Dorsolateral prefrontal cortex (tissue), 120 donors: ENCODE measurements at regions of chr3 and their contacts with region 1.

Region 1: GRCh38 chr3:171187706-171188290 is 161.3 kb upstream of the SLC2A2 start:
- DNase-seq: no peak
- H3K4me3 ChIP-seq: no peak overlapping the region
- H3K27ac ChIP-seq: peak overlapping the region in 2 of 59 donors; percentile 29 to 38
- H3K27me3 ChIP-seq: no peaks in the 10 kb centered on the region
- CTCF ChIP-seq: peak; percentile 35 to 87 (median 73)

Region 2: GRCh38 chr3:171018156-171018935 is 169.5 kb before region 1 on chr3:
- intact Hi-C with region 1: no loop called
- DNase-seq: no peak
- H3K4me3 ChIP-seq: no peak overlapping the region
- H3K27ac ChIP-seq: no peak overlapping the region
- H3K27me3 ChIP-seq: peaks cover 0 to 5% (median 0%) of the 10 kb centered on the region in 45 donors
- CTCF ChIP-seq: no peak

Region 3: DNA sequence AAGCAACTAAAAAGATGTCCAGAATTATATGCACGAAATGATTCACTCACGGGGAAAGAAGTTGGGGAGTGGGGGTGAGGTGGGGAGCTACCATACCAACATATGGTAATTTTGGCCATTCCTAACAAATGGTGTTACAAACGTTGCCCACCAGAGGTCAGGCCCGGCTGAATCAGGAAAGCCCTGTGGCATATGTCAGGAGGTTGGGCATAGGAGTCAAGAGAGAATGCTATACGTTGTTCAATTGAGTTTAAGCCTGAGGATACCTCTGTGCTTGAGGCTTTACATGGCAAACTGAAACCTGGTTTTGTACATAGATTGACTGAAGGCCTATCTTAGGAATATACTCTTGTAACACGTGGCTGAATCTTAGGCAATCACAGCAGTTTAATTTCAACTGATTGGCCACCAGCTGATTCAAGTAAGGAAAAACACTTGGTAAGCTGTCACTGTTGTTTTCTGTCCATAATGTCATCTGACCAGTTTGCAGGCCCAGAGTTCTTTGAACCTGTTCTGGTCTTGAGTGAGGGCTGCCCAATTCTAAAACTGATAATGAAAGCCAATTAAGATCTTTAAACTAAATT is 137.8 kb before region 1 on chr3:
- intact Hi-C with region 1: loop called (anchors 2 to 10 kb)
- DNase-seq: peak in 8 of 10 donors; percentile 18 to 62 (median 50)
- H3K4me3 ChIP-seq: no peak overlapping the region
- H3K27ac ChIP-seq: peak overlapping the region in 2 of 59 donors; percentile 6 to 18
- H3K27me3 ChIP-seq: no peaks in the 10 kb centered on the region
- CTCF ChIP-seq: peak in 55 of 56 donors; percentile 21 to 84 (median 66)

Region 4: DNA sequence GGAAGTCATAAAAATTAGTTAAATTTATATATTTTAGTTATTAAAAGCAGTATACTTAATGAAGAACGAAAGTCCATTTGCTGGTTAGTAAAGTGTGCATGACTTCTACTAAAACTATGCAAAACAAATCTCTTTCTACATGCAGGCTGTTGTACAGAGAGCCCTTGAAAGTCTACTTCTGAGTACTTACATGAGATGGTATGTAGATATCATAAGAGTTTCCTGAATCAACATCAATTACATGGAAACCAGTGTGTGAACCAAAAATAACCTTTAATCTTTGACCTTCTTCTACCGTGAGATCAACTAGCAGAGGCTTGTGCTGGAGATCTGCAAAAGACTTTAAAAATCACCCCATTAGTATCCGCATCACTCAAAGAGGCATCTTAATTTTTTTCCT is 119.1 kb before region 1 on chr3:
- intact Hi-C with region 1: no loop called
- DNase-seq: no peak
- H3K4me3 ChIP-seq: no peak overlapping the region
- H3K27ac ChIP-seq: no peak overlapping the region
- H3K27me3 ChIP-seq: no peaks in the 10 kb centered on the region
- CTCF ChIP-seq: no peak